ENCODE measurements at regions of chr4 and their contacts with region 1.

Region 1: DNA sequence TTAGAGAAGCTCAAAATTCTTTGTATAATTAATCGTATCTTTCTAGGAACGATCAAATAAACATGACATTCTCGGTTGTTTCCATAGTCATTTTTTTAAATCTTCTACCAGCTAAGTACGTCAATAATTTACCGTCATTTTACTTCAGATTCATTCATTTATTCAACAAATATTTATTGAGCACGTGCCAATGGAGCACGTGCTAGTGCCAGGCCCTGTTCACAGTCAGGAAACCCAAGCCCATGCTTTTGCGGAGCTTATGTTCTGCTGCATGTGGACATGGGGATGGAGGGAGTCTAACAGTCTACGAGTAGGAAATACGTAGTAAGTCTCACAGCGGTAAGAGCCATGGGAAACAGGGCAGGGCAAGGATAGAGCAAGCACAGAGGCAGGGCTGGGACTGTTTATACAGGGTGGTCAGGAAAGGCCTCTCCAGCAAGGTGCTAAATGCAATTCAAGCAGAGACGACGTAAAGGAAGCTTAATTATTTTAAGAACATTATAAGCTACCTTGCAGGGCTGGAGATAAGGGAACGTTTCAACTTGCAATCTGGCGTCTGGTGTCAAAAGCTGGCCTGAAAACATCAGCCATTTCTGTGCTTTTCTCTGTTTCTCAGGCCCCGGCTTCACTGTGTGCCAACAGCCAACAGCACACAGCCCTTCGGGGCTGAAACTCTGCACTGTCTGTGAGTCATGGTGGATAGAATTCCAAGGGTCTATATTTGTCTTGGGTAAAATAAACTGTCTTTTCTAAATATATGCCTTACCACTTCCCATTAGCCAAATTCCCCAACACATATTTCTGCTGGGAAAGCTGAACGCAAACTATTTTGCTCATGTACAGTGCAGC is 517.1 kb upstream of the ZFP42 start:
- DNase-seq: peak; percentile 82
- ATAC-seq: peak; percentile 75
- H3K4me3 ChIP-seq: peak overlapping the region; percentile 5; the same call in 1 of the 2 replicates
- H3K27ac ChIP-seq: peak overlapping the region; percentile 96
- H3K4me1 ChIP-seq: peaks cover 36% of the 10 kb centered on the region
- H3K27me3 ChIP-seq: no peaks in the 10 kb centered on the region
- CTCF ChIP-seq: no peak

Region 2: GRCh38 chr4:186936496-186937375 is 541.8 kb before region 1 on chr4:
- CTCF ChIA-PET with region 1: no interaction called
- POLR2A ChIA-PET with region 1: no interaction called
- intact Hi-C with region 1: loop called (anchors 10 kb)
- DNase-seq: peak; percentile 79
- ATAC-seq: peak; percentile 66
- H3K4me3 ChIP-seq: peak overlapping the region; percentile 54
- H3K27ac ChIP-seq: peak overlapping the region; percentile 92
- H3K4me1 ChIP-seq: peaks cover 47% of the 10 kb centered on the region
- H3K27me3 ChIP-seq: no peaks in the 10 kb centered on the region
- CTCF ChIP-seq: peak; percentile 48; the same call in 1 of the 2 replicates

Region 3: DNA sequence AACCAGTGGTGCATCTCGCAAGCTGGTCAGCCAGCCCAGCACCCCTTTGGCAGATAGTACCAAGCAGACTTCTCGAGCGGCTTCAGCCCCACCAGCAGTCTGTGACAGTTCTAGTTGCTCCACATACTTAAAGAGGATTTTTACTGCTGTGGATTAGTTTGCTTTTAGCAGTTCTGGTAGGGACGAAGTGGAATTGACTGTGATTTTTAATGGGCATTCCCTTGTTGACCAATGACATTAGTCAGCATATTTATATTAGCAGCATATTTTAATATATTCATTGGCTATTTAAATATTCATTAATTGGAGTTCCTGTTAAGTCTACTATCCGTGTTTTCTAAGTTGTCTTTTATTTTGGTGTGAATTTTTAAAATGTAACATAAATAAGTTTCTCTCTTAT is 254.0 kb before region 1 on chr4:
- CTCF ChIA-PET with region 1: no interaction called
- POLR2A ChIA-PET with region 1: no interaction called
- intact Hi-C with region 1: loop called (anchors 5 kb)
- DNase-seq: no peak
- ATAC-seq: no peak
- H3K4me3 ChIP-seq: no peak overlapping the region
- H3K27ac ChIP-seq: no peak overlapping the region
- H3K4me1 ChIP-seq: peaks cover 15% of the 10 kb centered on the region
- H3K27me3 ChIP-seq: no peaks in the 10 kb centered on the region
- CTCF ChIP-seq: no peak

Region 4: DNA sequence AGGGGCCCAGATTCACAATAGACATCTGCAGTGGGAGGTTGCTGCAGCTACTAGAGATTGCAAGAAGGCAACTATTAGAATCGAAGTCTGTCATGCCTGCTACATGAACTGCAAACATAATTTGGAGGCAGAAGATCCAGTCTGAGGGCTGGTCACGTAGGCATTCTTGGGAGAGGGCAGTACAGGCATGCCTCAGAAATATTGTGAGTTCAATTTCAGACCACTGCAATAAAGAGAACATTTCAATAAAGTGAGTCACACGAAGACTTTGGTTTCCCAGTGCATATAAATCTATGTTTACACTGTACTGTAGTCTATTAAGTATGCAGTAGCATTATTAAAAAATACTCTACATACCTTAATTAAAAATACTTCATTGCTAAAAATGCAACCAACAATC is 169.1 kb before region 1 on chr4:
- CTCF ChIA-PET with region 1: no interaction called
- POLR2A ChIA-PET with region 1: no interaction called
- intact Hi-C with region 1: loop called (anchors 2 kb)
- DNase-seq: peak; percentile 80
- ATAC-seq: peak; percentile 87
- H3K4me3 ChIP-seq: no peak overlapping the region
- H3K27ac ChIP-seq: peak overlapping the region; percentile 52
- H3K4me1 ChIP-seq: peaks cover 38% of the 10 kb centered on the region
- H3K27me3 ChIP-seq: no peaks in the 10 kb centered on the region
- CTCF ChIP-seq: no peak

Region 5: GRCh38 chr4:187516224-187516623 is 37.7 kb after region 1 on chr4:
- CTCF ChIA-PET with region 1: no interaction called
- POLR2A ChIA-PET with region 1: no interaction called
- intact Hi-C with region 1: loop called (anchors 1 kb)
- DNase-seq: no peak
- ATAC-seq: no peak
- H3K4me3 ChIP-seq: no peak overlapping the region
- H3K27ac ChIP-seq: no peak overlapping the region
- H3K4me1 ChIP-seq: no peaks in the 10 kb centered on the region; the same call in 1 of the 2 replicates
- H3K27me3 ChIP-seq: no peaks in the 10 kb centered on the region
- CTCF ChIP-seq: no peak

Region 6: GRCh38 chr4:187606581-187606980 is 128.1 kb after region 1 on chr4:
- CTCF ChIA-PET with region 1: no interaction called
- POLR2A ChIA-PET with region 1: no interaction called
- intact Hi-C with region 1: loop called (anchors 5 kb)
- DNase-seq: peak; percentile 64
- ATAC-seq: peak; percentile 60
- H3K4me3 ChIP-seq: no peak overlapping the region
- H3K27ac ChIP-seq: no peak overlapping the region
- H3K4me1 ChIP-seq: peaks cover 16% of the 10 kb centered on the region
- H3K27me3 ChIP-seq: no peaks in the 10 kb centered on the region
- CTCF ChIP-seq: peak; percentile 81